Aorta (tissue), 5 donors: ENCODE measurements at regions of chr11 and their contacts with region 1.

Region 1: DNA sequence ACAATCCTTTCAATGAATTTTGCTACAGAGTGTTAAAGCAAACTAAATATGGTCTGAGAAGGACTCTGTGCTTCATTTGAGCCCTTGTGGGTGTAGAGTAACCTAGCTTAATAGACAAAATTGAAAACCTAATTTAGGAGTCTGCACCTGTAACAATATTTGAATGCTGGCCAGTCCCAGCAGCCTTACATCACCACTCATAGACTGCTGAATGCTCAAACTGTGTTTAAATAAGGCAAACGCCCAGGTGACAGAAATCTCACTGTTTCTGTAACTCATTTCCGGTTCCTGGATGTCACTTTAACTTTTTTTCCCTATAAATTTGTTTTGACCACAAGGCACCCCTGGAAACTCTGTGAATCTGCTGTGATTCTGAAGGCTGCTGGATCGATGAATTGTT is 45.5 kb upstream of the GLYATL1B start:
- DNase-seq: no peak
- ATAC-seq: no peak
- H3K4me3 ChIP-seq: no peak overlapping the region
- H3K27ac ChIP-seq: no peak overlapping the region
- H3K4me1 ChIP-seq: no peaks in the 10 kb centered on the region
- H3K27me3 ChIP-seq: no peaks in the 10 kb centered on the region

Region 2: DNA sequence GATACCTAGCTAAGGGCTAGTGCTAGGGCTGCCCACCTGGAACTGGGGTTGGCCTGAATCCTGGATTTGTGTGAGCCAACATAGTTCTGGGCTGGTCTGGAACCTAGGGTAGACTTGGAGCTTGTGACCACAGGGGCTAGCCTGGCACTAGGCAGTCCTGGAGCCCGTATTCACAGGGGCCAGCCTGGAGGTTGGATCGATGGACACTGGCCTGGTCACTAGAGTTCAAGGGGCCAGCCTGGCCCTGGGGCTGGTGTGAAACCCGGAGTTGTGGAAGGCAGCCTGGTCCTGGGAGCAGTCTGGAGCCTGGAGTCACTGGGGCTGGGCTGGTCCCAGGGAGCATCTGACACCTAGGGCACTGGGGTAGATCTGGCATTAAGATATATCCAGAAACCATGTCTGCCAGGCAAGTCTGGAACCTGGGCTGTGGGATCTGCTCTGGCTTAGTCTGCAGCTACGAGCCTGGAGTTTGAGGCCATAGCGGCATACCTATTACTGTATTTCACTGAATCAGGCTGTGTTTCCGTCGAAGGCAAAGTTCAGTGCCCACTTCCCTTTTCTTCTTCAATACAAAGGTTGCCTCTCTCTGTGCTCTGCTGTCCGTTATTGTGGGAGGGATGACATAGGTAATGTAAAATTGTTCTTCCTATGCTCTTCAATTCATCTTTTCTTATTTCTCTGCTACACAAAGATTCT is 36.4 kb after region 1 on chr11:
- intact Hi-C with region 1: loop called in 1 of 2 experiments (anchors 5 kb)
- DNase-seq: no peak
- ATAC-seq: peak; percentile 46
- H3K4me3 ChIP-seq: no peak overlapping the region
- H3K27ac ChIP-seq: no peak overlapping the region
- H3K4me1 ChIP-seq: no peaks in the 10 kb centered on the region
- H3K27me3 ChIP-seq: no peaks in the 10 kb centered on the region

Region 3: DNA sequence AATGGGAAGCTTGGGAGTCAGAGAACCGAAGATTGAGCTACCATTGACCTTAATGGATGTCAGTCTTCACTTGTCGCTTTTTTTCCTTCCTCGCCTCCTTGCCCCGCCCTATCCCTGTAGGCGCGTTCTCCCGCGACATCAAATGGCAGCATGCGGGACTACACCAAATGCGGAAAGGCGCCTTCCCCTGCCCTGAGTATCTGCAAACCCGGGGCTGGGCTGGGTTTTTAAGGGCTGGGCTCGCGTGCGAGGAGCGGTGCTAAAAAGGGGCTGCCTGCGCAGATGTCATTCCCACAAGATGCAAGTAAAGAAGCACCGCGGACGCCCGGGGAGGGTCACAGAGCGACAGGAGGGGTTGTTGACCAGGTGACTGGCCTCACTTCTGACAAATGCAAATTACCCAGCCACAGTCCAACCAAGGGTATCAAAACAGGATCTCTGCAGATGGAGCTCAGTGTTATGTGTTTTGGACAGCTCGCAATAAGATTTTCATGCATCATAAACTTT is 61.7 kb after region 1 on chr11:
- intact Hi-C with region 1: no loop called
- DNase-seq: peak; percentile 69 to 77
- ATAC-seq: no peak
- H3K4me3 ChIP-seq: no peak overlapping the region
- H3K27ac ChIP-seq: no peak overlapping the region
- H3K4me1 ChIP-seq: no peaks in the 10 kb centered on the region
- H3K27me3 ChIP-seq: no peaks in the 10 kb centered on the region